ENCODE measurements at regions of chr1 and their contacts with region 1.

Region 1: DNA sequence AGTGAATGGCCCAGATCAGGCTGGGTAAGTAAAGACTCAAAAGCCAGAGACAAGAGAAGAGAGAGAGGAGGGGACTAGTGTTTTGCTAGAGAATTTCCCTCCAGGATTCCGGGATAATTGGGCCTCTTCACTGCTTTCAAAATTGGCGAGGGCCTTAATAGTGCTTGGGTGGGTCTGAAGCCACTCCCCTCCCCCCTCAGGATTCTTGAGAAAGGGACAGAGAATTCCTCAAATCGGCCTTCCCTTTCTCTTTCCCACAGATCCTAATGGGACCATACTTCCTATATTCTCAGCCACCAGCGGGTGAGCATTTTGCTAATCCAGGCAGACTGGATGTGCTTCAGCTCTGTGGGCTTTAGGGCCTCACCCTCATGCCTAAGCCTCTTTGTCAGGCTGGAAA is 11.9 kb downstream of the SFN start:
- H3K4me3 Mint-ChIP-seq: no peak overlapping the region
- H3K27ac Mint-ChIP-seq: no peak overlapping the region
- H3K4me1 Mint-ChIP-seq: no peaks in the 10 kb centered on the region
- H3K27me3 Mint-ChIP-seq: no peaks in the 10 kb centered on the region

Region 2: GRCh38 chr1:26602378-26602959 is 272.4 kb before region 1 on chr1:
- intact Hi-C with region 1: loop called (anchors 1 kb)
- H3K4me3 Mint-ChIP-seq: no peak overlapping the region
- H3K27ac Mint-ChIP-seq: no peak overlapping the region
- H3K4me1 Mint-ChIP-seq: peaks cover 41% of the 10 kb centered on the region
- H3K27me3 Mint-ChIP-seq: no peaks in the 10 kb centered on the region

Region 3: GRCh38 chr1:26811057-26811456 is 63.8 kb before region 1 on chr1:
- intact Hi-C with region 1: loop called (anchors 5 kb)
- H3K4me3 Mint-ChIP-seq: no peak overlapping the region
- H3K27ac Mint-ChIP-seq: peak overlapping the region; percentile 78
- H3K4me1 Mint-ChIP-seq: peaks cover 28% of the 10 kb centered on the region
- H3K27me3 Mint-ChIP-seq: no peaks in the 10 kb centered on the region

Region 4: GRCh38 chr1:26853156-26853555 is 21.7 kb before region 1 on chr1:
- intact Hi-C with region 1: loop called (anchors 1 kb)
- H3K4me3 Mint-ChIP-seq: no peak overlapping the region
- H3K27ac Mint-ChIP-seq: no peak overlapping the region
- H3K4me1 Mint-ChIP-seq: no peaks in the 10 kb centered on the region
- H3K27me3 Mint-ChIP-seq: no peaks in the 10 kb centered on the region

Region 5: DNA sequence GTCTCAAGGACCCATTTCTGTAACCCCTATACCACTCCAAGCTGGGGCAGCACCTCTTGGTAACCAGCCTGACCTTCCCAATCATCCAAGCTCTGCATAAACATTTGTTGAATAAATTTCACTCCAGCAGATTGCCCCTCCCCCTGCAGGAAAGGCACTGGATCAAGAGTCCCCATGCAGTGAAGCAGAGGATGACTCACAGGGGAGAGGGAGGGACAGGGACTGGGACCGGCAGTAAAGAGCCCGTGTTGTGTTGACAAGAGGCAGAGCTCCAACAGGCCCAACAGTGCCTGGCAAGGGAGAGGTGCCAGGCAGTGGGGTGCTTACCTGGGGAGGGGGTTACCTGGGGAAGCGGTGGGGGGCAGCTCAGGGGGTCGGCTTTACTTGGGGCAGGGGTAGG is 247.8 kb after region 1 on chr1:
- intact Hi-C with region 1: no loop called
- H3K4me3 Mint-ChIP-seq: no peak overlapping the region
- H3K27ac Mint-ChIP-seq: peak overlapping the region; percentile 14
- H3K4me1 Mint-ChIP-seq: peaks cover 58% of the 10 kb centered on the region
- H3K27me3 Mint-ChIP-seq: no peaks in the 10 kb centered on the region